Caki2 (cell line): ENCODE measurements at regions of chr2 and their contacts with region 1.

Region 1: DNA sequence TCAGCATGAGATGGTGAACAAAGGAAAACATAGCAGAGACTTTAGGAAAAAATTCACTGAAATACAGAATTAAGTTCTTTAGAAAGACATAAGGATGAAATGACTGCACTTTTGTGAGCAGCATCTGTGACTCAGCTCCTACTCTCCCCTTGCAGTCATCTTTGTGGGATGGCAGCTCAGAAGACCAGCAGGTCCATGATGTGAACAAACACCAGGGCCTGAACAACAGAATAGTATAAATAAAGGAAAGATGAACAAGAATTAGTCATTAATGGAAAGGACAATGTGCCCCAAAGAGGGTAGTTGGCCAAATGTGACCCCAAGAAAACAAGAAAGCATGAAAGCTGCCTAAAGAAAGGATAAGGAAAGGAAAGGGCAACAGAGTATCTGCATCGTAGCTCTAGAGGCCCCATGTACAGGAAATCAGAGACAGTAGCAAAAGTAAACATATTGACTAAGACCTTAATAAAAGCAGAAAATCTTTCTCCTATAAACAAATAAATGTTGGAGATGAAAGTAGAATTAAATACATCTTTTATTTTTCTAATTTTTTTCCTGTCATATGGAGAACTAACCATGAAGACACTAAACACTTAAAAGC is 318.0 kb downstream of the ZEB2 start:
- DNase-seq: no peak

Region 2: GRCh38 chr2:144052083-144052482 is 149.9 kb before region 1 on chr2:
- in situ Hi-C with region 1: loop called (anchors 10 kb)
- DNase-seq: no peak

Region 3: DNA sequence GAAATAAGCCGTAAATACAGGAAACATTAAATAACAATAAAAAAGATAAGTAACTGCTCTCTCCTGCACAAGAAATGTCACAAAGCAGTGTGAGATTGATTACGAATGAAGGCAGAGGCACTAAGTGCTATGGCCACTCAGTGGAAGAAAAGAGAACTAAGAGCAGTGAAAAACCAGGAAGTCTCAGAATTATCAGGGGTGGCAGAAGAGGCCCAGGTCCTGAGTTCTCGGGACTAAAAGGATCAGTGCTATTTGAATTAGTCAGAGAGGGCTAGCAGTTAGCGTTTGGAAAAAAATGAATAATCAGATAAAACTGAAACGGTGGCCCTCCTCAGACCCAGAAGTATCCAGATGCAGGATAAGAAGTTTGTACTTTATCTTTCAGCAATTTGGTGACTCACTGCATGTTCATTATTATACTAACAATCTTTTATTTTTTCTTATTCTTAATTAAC is 49.1 kb before region 1 on chr2:
- in situ Hi-C with region 1: no loop called
- DNase-seq: no peak